Activated T-helper 1 cell treated with anti-CD3 and anti-CD28 coated beads, Interleukin-12 subunit alpha, Interleukin-12 subunit beta, Interleukin-2, Interleukin-4 antibody, amounts not matched to agents 30 ng/mL and 10 ng/mL and 1 ng/mL, durations not matched to agents 14 hours and 24 hours and 36 hours (primary cell): ENCODE measurements at regions of chr22 and their contacts with region 1.

Region 1: GRCh38 chr22:38272373-38273134 is at the start of gene TMEM184B:
- DNase-seq: peak; percentile 82
- H3K4me3 Mint-ChIP-seq: peak within 1 kb of the TSS; percentile 87
- H3K27ac Mint-ChIP-seq: peak within 1 kb of the TSS; percentile 87
- H3K4me1 Mint-ChIP-seq: peaks cover 45% of the 10 kb centered on the region
- H3K27me3 Mint-ChIP-seq: peaks cover 11% of the 10 kb centered on the region
- total RNA-seq, gene TMEM184B: 36.6 and 39.1 TPM in 2 replicates

Region 2: GRCh38 chr22:38262051-38262795 is 10.3 kb before region 1 on chr22:
- intact Hi-C with region 1: no loop called
- DNase-seq: peak; percentile 14
- H3K4me3 Mint-ChIP-seq: no peak overlapping the region
- H3K27ac Mint-ChIP-seq: no peak overlapping the region
- H3K4me1 Mint-ChIP-seq: peaks cover 28% of the 10 kb centered on the region
- H3K27me3 Mint-ChIP-seq: no peaks in the 10 kb centered on the region

Region 3: DNA sequence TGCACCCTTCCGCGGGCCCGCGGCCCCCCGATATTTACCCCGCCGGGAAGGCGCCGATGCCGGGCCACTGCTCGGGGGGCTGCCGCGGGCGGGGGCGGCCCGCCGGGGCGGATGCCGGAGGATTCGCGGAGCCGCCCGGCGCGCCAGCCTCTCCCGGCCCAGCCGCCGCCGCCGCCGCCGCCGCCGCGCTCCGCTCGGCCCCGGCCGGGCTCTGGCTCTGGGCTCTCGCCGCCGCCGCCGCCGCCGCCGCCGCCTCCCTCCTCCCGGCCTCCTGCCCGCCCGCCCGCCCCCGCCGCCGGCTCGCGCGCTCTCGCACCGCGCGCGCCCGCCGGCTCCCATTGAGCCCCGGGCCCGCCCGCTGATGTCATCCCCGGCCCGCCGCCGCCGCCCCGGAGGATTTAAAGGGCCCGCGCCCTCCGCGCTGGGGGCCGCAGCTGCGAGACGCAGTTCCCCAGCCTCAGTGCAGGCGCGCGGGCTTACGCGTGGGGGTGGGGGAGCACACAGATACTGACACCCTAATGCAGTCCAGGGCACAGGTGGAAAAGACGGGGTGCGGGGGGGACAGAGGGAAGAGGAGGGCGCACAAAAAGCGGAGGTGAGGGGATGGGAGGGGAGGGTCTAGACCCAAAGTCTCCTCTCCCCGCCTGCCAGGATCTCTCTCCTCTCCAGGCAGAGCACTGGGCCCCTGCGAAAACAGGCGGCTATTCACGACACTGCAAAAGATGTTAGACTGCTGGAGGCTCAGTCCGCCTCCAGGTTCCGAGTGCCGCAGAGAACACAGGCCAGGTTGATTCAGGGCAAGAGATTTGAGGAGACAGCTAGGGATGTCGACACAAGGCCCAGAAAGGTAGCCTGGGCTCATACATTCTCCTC is 44.8 kb after region 1 on chr22 and contains the start of gene CSNK1E:
- intact Hi-C with region 1: loop called (anchors 1 kb)
- DNase-seq: peak; percentile 74
- H3K4me3 Mint-ChIP-seq: peak within 1 kb of the TSS; percentile 90
- H3K27ac Mint-ChIP-seq: peak within 1 kb of the TSS; percentile 87
- H3K4me1 Mint-ChIP-seq: peaks cover 44% of the 10 kb centered on the region
- H3K27me3 Mint-ChIP-seq: no peaks in the 10 kb centered on the region
- total RNA-seq, gene CSNK1E: 151 and 154 TPM in 2 replicates